ENCODE measurements at regions of chr7 and their contacts with region 1.

Region 1: DNA sequence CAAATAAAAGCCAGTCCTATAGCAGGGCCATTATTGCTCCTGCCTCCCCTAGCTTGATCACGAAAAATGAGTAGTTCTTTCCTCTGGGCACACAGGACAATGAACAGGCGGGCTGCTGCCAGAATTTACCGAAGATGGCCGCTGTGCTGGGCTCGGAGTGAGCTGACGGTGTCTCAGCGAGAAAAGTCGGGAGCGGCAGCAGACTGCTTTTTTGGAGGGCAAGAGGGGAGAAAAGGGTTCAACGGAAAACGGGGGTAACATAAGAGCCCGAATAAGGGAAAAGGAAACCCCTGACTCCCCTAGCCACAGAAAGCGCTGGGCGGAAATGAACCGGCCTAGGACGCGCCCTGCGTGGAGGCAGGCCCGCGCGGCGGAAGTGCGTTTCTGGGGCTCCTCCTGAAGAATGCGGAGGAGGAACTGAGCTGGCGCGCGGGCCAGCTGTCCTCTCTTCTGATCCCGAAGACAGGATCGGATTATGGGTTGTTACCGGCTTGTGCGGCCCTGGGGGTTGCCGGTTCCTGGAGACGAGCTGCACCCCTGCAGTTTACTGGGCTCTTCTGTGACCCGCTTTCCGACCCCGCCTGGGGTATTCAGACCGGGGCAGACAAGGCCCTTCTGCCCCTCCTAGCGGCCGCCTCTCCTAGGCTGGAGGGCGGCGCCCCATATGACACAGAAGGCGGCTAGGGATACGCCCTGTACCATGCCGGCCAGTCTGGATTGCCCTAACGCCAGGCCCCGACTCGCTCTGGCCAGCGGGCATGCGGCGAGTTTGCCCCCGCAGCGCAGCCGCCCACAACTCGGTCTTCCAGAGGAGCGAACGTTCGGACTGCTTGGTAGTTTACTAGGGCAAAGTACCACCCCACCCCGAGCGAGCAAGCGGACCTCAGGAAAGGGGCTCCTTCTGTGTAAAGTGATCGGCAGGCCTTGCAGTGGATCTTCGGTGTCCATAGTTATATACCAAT is 30.1 kb upstream of the KMT2E start:
- DNase-seq: peak; percentile 97

Region 2: GRCh38 chr7:105013221-105013815 is 29.5 kb after region 1 on chr7:
- intact Hi-C with region 1: loop called in 1 of 2 experiments (anchors 2 kb)
- DNase-seq: peak; percentile 98

Region 3: GRCh38 chr7:105098863-105099515 is 115.1 kb after region 1 on chr7:
- intact Hi-C with region 1: loop called in 1 of 2 experiments (anchors 10 kb)
- DNase-seq: no peak

Region 4: DNA sequence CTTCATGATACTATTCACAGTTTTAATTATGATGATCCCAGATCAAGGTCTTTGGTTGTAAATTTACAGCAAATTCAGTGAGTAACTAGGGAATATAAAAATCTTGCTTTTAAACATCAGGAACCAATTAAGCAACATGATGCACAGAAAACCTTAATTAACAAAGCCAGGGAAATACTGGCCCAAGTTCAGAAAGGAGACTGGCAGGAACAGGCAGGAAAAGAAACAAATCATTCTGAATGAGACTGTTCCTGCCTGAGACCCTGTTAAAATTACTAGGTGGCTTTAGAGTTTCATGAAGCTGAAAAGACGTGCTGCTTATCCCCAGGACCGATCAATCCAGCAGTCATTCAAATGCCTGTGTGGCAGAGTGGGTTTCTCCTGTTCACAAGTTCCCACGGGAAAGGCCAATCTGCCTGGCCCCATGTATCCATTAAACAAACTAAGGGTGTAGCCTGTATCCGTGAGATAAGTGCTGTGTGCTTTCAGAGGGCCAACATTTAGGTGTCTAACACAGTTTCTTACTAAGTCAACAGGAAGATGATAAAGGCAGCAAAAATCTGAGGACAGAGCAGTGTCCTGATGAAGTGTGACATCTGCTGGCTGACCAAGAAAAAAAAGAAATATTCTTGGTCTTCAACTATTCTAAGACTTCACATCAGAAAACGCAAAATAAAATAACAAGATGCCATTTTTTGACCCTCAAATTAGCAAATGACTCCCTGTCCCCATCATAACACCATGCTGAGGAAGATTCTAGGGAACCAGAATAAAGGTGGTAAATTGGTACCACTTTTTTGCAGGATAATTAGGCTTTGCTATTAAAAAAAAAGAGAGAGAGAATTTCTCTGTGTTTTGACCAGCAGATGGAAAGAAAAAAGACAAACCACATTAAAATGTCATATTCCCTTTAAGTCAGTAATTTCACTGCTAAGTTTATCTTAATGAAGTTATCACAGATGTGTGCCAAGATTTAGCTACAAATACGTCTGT is 504.0 kb after region 1 on chr7:
- intact Hi-C with region 1: loop called in 1 of 2 experiments (anchors 10 kb)
- DNase-seq: no peak